Spleen (tissue), 13 donors: ENCODE measurements at regions of chrX and their contacts with region 1.

Region 1: GRCh38 chrX:57821703-57822375 is 88.4 kb downstream of the ZXDA start:
- DNase-seq: no peak
- H3K4me3 ChIP-seq: peak overlapping the region in 2 of 8 donors; percentile 23 to 30
- H3K27ac ChIP-seq: no peak overlapping the region
- H3K4me1 ChIP-seq: no peaks in the 10 kb centered on the region
- H3K27me3 ChIP-seq: peaks cover 0 to under 1% (median 0%) of the 10 kb centered on the region in 7 donors
- CTCF ChIP-seq: peak; percentile 28 to 70 (median 57)
- POLR2A ChIP-seq: no peak

Region 2: DNA sequence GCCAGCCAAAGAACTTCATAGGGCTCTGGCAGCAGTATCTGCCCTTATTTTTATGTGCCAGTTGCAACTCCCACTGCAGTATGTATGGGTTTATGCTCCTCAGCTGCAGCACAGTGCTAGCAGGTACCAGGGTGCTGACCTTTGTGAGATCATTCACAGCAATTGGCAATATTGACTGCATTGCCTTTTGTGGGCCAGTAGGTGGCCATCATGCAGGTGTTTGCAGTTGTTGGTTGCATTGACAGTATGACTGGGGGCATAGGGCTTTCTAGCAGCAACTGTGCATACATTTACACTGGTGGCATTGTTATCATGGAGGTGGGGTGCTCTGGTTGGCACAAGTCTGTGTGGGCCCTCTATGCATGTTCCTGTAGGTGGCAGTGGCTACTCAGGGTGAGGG is 492.8 kb before region 1 on chrX:
- intact Hi-C with region 1: no loop called
- DNase-seq: no peak
- H3K4me3 ChIP-seq: no peak overlapping the region
- H3K27ac ChIP-seq: no peak overlapping the region
- H3K4me1 ChIP-seq: no peaks in the 10 kb centered on the region
- H3K27me3 ChIP-seq: peaks cover 0 to 3% (median 0%) of the 10 kb centered on the region in 7 donors
- CTCF ChIP-seq: no peak
- POLR2A ChIP-seq: no peak

Region 3: DNA sequence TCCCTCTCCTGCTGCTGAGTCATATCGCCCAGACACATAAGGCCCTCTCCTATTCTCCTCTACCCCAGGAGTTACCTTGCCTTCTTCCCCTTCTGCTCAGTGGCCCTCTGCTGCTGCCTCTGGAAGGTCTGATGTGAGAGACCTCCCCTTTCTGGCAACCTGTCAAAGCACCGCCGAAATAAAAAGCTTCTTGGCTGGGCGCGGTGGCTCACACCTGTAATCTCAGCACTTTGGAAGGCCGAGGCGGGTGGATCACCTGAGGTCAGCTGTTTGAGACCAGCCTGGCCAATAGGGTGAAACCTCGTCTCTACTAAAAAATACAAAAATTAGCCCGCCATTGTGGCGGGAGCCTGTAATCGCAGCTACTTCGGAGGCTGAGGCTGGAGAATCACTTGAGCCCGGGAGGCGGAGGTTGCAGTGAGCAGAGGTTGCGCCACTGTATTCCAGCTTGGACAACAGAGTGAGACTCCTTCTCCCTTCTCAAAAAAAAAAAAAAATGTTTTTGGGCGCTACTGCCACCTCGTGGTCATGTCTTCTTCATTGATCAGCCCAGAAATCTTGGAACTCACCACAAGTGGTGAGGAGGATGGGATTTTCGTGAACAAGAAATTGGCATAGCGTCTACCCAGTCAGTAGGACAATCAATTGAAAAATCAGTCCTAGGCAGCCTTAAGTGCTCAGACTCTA is 97.1 kb after region 1 on chrX:
- intact Hi-C with region 1: loop called (anchors 5 kb)
- DNase-seq: no peak
- H3K4me3 ChIP-seq: no peak overlapping the region
- H3K27ac ChIP-seq: no peak overlapping the region
- H3K4me1 ChIP-seq: no peaks in the 10 kb centered on the region
- H3K27me3 ChIP-seq: peaks cover 0 to 6% (median 0%) of the 10 kb centered on the region in 7 donors
- CTCF ChIP-seq: peak in 8 of 11 experiments; percentile 17 to 61 (median 50)
- POLR2A ChIP-seq: no peak

Region 4: GRCh38 chrX:58025979-58026378 is 204.1 kb after region 1 on chrX:
- intact Hi-C with region 1: loop called (anchors 5 kb)
- DNase-seq: no peak
- H3K4me3 ChIP-seq: no peak overlapping the region
- H3K27ac ChIP-seq: no peak overlapping the region
- H3K4me1 ChIP-seq: no peaks in the 10 kb centered on the region
- H3K27me3 ChIP-seq: peaks cover 0 to 2% (median 0%) of the 10 kb centered on the region in 7 donors
- CTCF ChIP-seq: peak in 10 of 11 experiments; percentile 10 to 58 (median 47)
- POLR2A ChIP-seq: no peak